Right cardiac atrium (tissue), 5 donors: ENCODE measurements at regions of chr2 and their contacts with region 1.

Region 1: DNA sequence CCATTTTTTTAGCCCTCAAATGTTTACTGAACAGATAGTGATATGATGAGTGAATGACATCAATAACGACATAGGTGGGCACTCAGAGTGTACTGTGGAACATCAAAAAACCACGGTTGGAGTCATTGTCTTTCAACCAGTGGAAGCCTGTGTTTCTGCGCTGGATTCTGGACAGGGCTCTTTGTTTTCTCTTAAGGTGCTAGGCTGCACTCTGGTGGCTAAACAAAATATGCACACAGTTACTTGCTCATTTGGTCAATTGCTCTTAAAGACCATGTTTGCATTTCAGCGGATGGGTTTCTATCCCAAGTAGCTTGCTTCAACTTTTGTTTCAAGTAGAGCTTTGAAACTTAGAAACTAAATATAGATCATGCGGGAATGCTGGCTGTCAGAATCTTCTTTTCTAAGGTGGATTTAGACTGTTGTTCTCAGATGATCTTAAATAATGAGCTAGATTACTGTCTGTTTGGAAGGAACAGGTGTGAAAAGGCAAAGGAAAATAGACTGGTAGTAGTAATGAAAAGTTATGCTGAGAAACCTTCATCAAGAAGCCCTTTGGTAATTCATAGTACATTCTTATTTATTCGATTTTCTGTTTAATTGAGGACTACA is 48.5 kb upstream of the LYPD6B start:
- DNase-seq: no peak
- ATAC-seq: peak; percentile 90 to 92
- H3K4me3 ChIP-seq: no peak overlapping the region
- H3K27ac ChIP-seq: no peak overlapping the region
- H3K4me1 ChIP-seq: no peaks in the 10 kb centered on the region
- H3K27me3 ChIP-seq: no peaks in the 10 kb centered on the region

Region 2: GRCh38 chr2:147937744-147938349 is 1052.1 kb before region 1 on chr2:
- intact Hi-C with region 1: loop called in 1 of 4 experiments (anchors 10 kb)
- DNase-seq: no peak
- ATAC-seq: peak; percentile 45 to 56
- H3K4me3 ChIP-seq: no peak overlapping the region
- H3K27ac ChIP-seq: no peak overlapping the region
- H3K4me1 ChIP-seq: no peaks in the 10 kb centered on the region
- H3K27me3 ChIP-seq: no peaks in the 10 kb centered on the region

Region 3: DNA sequence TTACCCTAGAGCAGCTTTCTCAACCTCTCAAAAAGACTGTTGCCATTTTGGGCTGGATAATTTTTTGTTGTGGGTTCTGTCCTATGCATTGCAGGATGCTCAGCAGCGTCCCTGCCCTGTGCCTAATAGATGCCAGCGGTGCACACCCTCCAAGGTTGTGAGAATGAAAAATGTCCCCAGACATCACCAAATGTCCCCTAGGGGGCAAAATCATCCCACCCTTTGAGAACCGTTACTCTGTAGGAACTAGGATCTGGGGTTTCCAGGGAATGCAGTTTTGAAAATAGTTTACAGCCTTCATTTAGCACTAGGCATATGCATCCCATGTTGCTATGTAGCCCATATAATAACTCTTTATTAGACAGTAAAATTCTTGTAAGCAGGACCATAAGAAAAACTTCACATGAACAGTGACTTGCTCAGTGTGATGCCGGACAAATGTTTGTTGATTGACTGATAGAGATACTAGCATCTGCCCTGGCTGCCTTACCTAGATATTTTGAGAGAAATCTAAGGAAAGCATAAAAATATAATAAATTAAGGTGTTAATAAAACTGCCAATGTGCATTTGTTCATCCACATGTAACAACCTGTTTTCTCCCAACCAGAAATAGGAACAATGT is 424.6 kb before region 1 on chr2:
- intact Hi-C with region 1: loop called in 2 of 4 experiments (anchors 10 kb)
- DNase-seq: no peak
- ATAC-seq: peak; percentile 38 to 60
- H3K4me3 ChIP-seq: no peak overlapping the region
- H3K27ac ChIP-seq: no peak overlapping the region
- H3K4me1 ChIP-seq: no peaks in the 10 kb centered on the region
- H3K27me3 ChIP-seq: no peaks in the 10 kb centered on the region

Region 4: DNA sequence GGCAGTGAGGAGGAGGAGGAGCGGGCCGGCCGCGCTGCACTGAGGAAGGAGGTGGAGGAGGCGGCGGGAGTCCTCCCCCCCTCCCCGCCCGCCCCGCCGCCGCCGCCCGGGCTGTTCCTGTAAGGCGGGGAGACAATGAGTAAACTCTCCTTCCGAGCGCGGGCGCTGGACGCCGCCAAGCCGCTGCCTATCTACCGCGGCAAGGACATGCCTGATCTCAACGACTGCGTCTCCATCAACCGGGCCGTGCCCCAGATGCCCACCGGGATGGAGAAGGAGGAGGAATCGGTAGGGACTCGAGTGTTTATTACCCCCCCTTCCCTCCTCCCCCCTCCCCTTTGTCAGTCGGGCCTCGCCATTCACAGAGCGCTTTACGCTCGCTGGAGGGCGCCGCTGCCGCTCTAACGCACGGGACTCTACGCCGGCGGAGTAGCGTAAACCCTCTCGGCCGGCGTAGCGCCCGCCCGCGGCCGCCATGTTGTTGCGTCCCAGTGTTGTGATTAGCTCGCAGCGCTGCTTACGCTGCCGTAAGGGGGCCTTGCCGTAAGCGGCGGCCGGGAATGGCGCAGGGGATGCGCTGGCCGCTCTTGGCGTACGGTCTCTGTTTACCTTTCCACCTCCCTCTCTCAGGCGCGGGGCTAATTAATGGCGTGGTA is 345.0 kb before region 1 on chr2:
- intact Hi-C with region 1: loop called in 1 of 4 experiments (anchors 10 kb)
- DNase-seq: peak; percentile 94 to 98 (median 97)
- ATAC-seq: peak; percentile 92
- H3K4me3 ChIP-seq: peak overlapping the region; percentile 92
- H3K27ac ChIP-seq: peak overlapping the region; percentile 98
- H3K4me1 ChIP-seq: no peaks in the 10 kb centered on the region
- H3K27me3 ChIP-seq: no peaks in the 10 kb centered on the region